ENCODE measurements at regions of chr5 and their contacts with region 1.

Region 1: DNA sequence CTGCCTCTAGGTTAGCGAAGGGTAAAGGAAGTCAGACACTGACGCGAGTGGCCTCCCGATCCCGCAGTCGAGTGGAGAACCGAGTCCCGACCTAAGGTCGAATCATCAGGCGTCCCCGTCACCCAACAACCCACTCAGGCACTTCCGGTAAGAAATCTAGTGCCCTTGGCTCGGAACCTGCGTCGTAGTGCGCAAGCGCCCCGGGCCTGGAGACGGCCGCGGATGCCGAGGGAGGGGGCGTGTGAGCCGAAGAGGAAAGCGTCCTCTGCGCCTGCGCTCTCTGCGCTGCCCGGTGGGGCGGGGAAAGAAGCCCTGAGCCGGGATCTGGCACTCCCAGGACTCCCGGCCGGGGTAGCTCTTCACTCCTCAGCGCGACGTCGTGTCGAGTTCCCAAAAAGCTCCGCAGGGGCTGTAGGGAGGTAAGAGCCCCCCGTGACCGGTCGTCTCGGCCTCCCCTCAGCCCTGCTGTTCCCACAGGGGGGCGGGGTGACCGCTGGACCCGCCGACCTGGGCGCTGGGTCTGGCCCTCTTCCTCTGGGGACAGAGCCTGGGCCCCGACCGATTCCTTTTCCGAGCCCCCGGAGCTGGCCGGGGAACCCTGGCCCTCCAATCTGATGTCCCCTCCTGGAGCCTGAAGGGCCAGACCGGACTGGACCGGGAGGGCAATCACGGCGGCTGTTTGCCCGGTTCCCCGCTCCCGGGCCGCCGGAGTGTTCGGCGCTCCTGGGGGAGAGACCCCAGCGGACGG is at the start of gene ZFYVE16:
- DNase-seq: peak; percentile 97
- H3K4me3 Mint-ChIP-seq: peak within 1 kb of the TSS; percentile 97
- H3K27ac Mint-ChIP-seq: peak within 1 kb of the TSS; percentile 96
- H3K4me1 Mint-ChIP-seq: peaks cover 14% of the 10 kb centered on the region
- H3K27me3 Mint-ChIP-seq: no peaks in the 10 kb centered on the region
- total RNA-seq, gene ZFYVE16: 8.0 to 10.3 TPM

Region 2: DNA sequence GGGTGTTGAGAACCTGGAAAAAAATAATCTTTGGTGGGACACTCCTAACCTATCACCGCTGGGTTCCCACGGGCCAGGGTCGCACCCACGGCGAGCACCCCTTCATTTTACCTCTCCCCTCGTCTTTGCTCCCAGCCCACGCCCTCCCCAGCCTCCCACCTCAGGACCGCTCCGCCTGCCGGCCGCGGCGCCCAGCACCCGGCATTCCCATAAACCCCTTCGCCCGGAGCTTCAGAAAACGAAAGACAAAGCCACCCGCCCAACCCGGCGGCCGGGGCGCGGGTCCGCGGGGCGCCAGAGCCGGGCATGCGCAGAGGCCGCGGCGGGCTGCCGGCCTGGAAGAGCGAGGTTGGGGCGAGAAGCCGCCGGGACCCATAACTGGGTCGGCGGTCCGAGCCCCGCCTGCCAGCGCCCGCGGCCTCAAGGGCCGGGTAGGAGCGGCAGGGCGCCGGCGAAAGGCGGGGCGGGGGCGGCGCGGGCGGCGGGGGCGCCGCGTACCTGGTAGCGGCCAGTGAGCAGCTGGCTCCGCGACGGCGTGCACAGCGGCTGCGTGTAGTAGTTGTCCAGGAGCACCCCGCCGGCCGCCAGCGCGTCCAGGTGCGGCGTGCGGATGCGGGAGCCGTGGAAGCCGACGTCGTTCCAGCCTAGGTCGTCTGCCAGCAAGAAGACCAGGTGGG is 1423.3 kb before region 1 on chr5:
- CTCF ChIA-PET with region 1: no interaction called
- intact Hi-C with region 1: loop called (anchors 10 kb)
- DNase-seq: peak; percentile 81
- H3K4me3 Mint-ChIP-seq: peak overlapping the region; percentile 84
- H3K27ac Mint-ChIP-seq: peak overlapping the region; percentile 87
- H3K4me1 Mint-ChIP-seq: peaks cover 35% of the 10 kb centered on the region
- H3K27me3 Mint-ChIP-seq: no peaks in the 10 kb centered on the region

Region 3: DNA sequence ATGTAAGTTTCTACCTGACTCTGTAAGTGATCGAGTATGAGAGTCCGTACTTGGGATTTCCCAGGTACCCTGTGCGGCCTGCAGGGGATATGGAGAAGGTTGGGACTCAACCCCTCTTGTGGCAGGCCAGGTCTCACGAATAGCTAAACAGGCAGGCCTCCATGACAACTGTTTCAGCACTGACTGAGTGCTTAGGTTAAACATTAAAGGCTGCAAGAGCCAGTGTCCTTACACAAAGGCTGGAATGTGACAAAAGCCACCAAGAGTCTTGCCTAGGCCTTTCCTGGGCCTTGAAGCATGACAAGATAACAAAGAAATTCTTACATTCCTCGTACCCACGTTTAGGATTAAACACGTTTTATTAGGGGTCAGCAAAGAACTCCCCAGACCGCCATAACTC is 314.1 kb before region 1 on chr5:
- CTCF ChIA-PET with region 1: interaction called, 4 read pairs
- intact Hi-C with region 1: loop called (anchors 1 kb)
- DNase-seq: no peak
- H3K4me3 Mint-ChIP-seq: no peak overlapping the region
- H3K27ac Mint-ChIP-seq: no peak overlapping the region
- H3K4me1 Mint-ChIP-seq: peaks cover 20% of the 10 kb centered on the region
- H3K27me3 Mint-ChIP-seq: no peaks in the 10 kb centered on the region

Region 4: DNA sequence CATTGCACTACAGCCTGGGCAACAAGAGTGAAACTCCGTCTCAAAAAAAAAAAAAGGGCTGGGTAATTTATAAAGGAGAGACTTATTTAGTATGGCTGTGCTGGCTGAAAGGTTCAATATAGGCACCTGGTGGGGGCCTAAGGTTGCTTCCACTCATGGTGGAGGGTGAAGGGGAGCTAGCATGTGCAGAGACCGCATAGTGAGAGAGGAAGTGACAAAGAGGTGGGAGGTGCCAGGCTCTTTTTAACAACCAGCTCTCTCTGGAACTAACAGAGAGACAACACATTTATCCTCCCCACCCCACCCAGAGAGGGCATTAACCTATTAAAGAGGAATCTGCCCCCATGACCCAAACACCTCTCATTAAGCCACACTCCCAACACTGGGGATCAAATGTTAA is 123.2 kb before region 1 on chr5:
- CTCF ChIA-PET with region 1: no interaction called
- intact Hi-C with region 1: loop called (anchors 5 kb)
- DNase-seq: peak; percentile 57
- H3K4me3 Mint-ChIP-seq: no peak overlapping the region
- H3K27ac Mint-ChIP-seq: peak overlapping the region; percentile 74
- H3K4me1 Mint-ChIP-seq: peaks cover 21% of the 10 kb centered on the region
- H3K27me3 Mint-ChIP-seq: no peaks in the 10 kb centered on the region

Region 5: DNA sequence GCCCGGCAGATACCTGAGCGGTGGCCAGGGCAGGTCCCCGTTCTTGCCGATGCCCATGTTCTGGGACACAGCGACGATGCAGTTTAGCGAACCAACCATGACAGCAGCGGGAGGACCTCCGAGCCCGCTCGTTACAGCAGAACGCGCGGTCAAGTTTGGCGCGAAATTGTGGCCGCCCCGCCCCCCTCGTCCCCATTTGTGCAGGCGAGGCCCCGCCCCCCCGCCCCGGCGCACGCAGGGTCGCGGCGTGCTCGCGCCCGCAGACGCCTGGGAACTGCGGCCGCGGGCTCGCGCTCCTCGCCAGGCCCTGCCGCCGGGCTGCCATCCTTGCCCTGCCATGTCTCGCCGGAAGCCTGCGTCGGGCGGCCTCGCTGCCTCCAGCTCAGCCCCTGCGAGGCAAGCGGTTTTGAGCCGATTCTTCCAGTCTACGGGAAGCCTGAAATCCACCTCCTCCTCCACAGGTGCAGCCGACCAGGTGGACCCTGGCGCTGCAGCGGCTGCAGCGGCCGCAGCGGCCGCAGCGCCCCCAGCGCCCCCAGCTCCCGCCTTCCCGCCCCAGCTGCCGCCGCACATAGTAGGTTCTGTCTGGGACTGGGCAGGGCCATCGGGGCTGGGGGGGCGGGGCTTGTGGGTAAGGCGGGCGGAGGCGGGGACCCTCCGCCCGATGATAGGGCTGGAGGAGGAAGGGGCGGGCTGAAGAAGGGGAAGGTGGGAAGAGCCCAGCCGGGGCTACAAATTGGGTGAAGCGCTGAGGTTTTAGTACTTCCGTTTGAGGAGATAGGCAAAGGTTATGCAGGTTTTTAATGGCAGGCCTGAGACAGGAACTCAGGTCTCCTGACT is 246.7 kb after region 1 on chr5 and contains the starts of genes DHFR and MSH3:
- CTCF ChIA-PET with region 1: no interaction called
- intact Hi-C with region 1: loop called (anchors 1 kb)
- DNase-seq: peak; percentile 95
- H3K4me3 Mint-ChIP-seq: peak within 1 kb of the TSS; percentile 95
- H3K27ac Mint-ChIP-seq: peak within 1 kb of the TSS; percentile 99
- H3K4me1 Mint-ChIP-seq: peaks cover 25% of the 10 kb centered on the region
- H3K27me3 Mint-ChIP-seq: no peaks in the 10 kb centered on the region
- total RNA-seq, gene DHFR: 107 to 112 TPM
- total RNA-seq, gene MSH3: 25.1 to 25.8 TPM

Region 6: DNA sequence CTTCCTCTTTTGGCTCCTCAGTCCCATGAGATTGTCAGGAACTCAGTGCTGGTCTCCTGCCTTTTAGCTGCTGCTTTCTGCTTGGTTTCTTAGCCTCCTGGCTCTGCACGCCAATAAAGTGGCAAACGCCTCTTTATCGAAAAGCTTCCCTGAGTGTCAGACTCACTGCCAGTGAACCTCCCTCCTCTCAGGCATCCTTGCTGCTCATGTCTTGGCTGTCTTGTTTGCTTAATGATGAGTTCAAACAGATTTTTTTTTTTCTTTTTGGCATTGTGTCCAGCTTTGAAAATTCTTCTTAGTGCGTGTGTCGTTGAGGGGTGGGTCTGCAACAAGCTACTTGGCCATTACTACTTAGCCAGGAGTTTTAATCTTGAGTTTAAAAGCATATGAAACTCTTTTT is 567.2 kb after region 1 on chr5:
- CTCF ChIA-PET with region 1: no interaction called
- intact Hi-C with region 1: no loop called
- DNase-seq: no peak
- H3K4me3 Mint-ChIP-seq: no peak overlapping the region
- H3K27ac Mint-ChIP-seq: no peak overlapping the region
- H3K4me1 Mint-ChIP-seq: peaks cover 74% of the 10 kb centered on the region
- H3K27me3 Mint-ChIP-seq: no peaks in the 10 kb centered on the region

Region 7: GRCh38 chr5:81006947-81007636 is 599.2 kb after region 1 on chr5:
- CTCF ChIA-PET with region 1: no interaction called
- intact Hi-C with region 1: loop called (anchors 5 kb)
- DNase-seq: peak; percentile 81
- H3K4me3 Mint-ChIP-seq: peak overlapping the region; percentile 89
- H3K27ac Mint-ChIP-seq: peak overlapping the region; percentile 99
- H3K4me1 Mint-ChIP-seq: peaks cover 78% of the 10 kb centered on the region
- H3K27me3 Mint-ChIP-seq: no peaks in the 10 kb centered on the region

Region 8: GRCh38 chr5:81450940-81451339 is 1043.0 kb after region 1 on chr5:
- CTCF ChIA-PET with region 1: no interaction called
- intact Hi-C with region 1: no loop called
- DNase-seq: no peak
- H3K4me3 Mint-ChIP-seq: no peak overlapping the region
- H3K27ac Mint-ChIP-seq: no peak overlapping the region
- H3K4me1 Mint-ChIP-seq: no peaks in the 10 kb centered on the region
- H3K27me3 Mint-ChIP-seq: no peaks in the 10 kb centered on the region

Measured in activated naive CD4-positive, alpha-beta T cell treated with anti-CD3 and anti-CD28 coated beads for 36 hours (primary cell).